Activated naive CD8-positive, alpha-beta T cell treated with anti-CD3 and anti-CD28 coated beads, Interleukin-2, amount 10 ng/mL, durations not matched to agents 7 days and 5 days (primary cell): ENCODE measurements at regions of chr19 and their contacts with region 1.

Region 1: GRCh38 chr19:23758187-23759074 is at the start of gene ZNF681:
- DNase-seq: peak; percentile 80
- ATAC-seq: peak; percentile 92
- H3K4me3 Mint-ChIP-seq: peak within 1 kb of the TSS; percentile 90
- H3K27ac Mint-ChIP-seq: peak within 1 kb of the TSS; percentile 93
- H3K4me1 Mint-ChIP-seq: peaks cover 15% of the 10 kb centered on the region
- H3K27me3 Mint-ChIP-seq: no peaks in the 10 kb centered on the region
- total RNA-seq, gene ZNF681: 5.8 to 6.0 TPM

Region 2: GRCh38 chr19:23686621-23687423 is 71.6 kb before region 1 on chr19 and contains the start of gene ZNF675:
- POLR2A ChIA-PET with region 1: interaction called, 29 read pairs
- DNase-seq: peak; percentile 83
- ATAC-seq: peak; percentile 93
- H3K4me3 Mint-ChIP-seq: peak within 1 kb of the TSS; percentile 98
- H3K27ac Mint-ChIP-seq: peak within 1 kb of the TSS; percentile 99
- H3K4me1 Mint-ChIP-seq: peaks cover 13% of the 10 kb centered on the region
- H3K27me3 Mint-ChIP-seq: no peaks in the 10 kb centered on the region
- total RNA-seq, gene ZNF675: 29.6 to 30.5 TPM

Region 3: GRCh38 chr19:23799321-23799720 is 40.9 kb after region 1 on chr19:
- POLR2A ChIA-PET with region 1: interaction called, 24 read pairs
- DNase-seq: peak; percentile 43
- ATAC-seq: peak; percentile 95
- H3K4me3 Mint-ChIP-seq: peak overlapping the region; percentile 78
- H3K27ac Mint-ChIP-seq: peak overlapping the region; percentile 91
- H3K4me1 Mint-ChIP-seq: peaks cover 18% of the 10 kb centered on the region
- H3K27me3 Mint-ChIP-seq: no peaks in the 10 kb centered on the region